Activated CD4-positive, alpha-beta T cell treated with anti-CD3 and anti-CD28 coated beads, Interleukin-2, amount 10 ng/mL, durations not matched to agents 24 days and 14 days (primary cell): ENCODE measurements at regions of chr5 and their contacts with region 1.

Region 1: DNA sequence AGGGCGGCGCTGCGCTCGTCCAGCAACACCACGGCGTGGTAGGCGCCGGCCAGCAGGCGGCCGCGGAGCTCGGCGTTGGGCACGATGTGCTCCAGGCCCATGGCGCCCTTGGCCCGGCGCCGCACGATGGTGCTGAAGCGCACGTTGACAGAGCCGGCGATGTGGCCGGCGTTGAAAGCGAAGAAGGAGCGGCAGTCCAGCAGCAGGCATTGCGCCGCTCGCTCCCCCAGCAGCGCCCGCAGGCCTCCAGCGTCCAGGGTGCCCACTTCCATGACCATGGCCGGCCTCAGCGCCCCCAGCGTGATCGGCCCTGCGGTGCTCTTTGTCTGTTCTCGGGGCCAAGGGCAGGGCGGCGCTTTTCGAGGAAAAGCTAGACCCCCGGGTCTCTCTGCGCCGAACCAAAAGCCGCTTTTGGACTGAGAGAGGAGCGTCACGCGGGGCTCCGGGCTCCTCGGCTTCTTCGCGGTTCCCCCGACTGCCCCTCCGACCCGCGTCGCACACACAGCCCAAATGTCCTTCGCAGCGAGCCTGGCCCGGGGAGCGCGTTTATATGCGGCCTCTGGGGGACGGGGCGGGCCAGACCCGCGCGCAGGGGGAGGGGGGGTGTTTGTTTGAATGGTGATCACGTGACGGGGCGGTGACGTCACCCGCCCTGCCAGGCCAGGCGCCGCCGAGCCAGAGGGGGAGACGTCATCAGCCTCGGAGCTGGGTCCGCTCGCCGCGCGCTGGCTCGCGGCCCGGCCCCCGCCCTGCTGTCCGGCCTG is at the start of gene DUSP1:
- DNase-seq: peak; percentile 98
- H3K4me3 Mint-ChIP-seq: peak within 1 kb of the TSS; percentile 91
- H3K27ac Mint-ChIP-seq: peak within 1 kb of the TSS; percentile 98
- H3K4me1 Mint-ChIP-seq: peaks cover 43% of the 10 kb centered on the region
- H3K27me3 Mint-ChIP-seq: no peaks in the 10 kb centered on the region
- total RNA-seq, gene DUSP1: 10.2 and 10.6 TPM in 2 replicates

Region 2: DNA sequence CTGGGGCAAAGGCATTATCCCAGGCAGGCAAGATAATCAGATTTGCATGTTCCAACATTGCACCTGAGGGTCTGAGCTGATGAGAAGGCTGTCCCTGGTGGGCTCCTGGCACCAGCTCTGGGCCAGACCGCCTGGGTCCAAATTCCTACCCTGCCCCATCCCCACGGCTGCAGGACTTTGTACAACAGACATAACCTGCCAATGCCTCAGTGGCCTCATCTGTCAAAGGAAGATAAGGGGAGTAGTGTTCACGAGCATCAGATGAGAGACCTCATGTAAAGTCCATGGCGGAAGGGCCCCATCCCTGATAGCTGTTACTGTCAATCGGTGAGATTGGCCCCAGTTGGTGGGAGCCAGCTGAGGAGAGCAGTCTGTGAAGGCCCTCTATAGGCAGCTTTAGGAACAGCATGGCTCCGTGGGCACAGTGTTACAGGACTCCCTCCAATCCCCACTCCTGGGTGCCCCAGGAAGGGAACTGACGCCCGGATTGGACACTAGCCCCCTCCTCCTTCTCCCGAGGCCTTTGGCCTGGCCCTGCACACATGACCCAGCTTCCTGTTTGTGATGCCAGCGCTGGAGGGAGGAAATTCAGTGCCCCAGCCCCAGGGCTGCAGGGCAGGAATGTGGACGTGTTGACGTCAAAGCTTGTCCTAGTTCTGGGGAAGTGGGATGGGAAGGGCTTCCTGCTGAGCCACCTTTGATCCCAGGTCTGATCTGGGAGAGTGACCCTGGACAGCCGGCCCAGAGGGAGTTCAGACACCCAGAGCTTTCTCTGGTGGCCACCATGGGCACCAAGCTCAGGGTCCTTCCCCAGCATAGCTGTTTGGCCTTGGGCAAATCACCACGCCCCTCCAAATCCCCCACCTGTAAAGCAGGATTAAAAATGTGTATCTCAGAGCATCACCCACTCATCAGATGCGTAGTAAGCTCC is 56.1 kb before region 1 on chr5:
- intact Hi-C with region 1: loop called (anchors 2 kb)
- DNase-seq: peak; percentile 90
- H3K4me3 Mint-ChIP-seq: no peak overlapping the region
- H3K27ac Mint-ChIP-seq: no peak overlapping the region
- H3K4me1 Mint-ChIP-seq: peaks cover 2% of the 10 kb centered on the region
- H3K27me3 Mint-ChIP-seq: peaks cover 10% of the 10 kb centered on the region

Region 3: GRCh38 chr5:172833686-172834414 is 63.0 kb after region 1 on chr5 and contains the start of gene ERGIC1:
- intact Hi-C with region 1: loop called (anchors 2 kb)
- DNase-seq: peak; percentile 95
- H3K4me3 Mint-ChIP-seq: peak within 1 kb of the TSS; percentile 89
- H3K27ac Mint-ChIP-seq: peak within 1 kb of the TSS; percentile 76
- H3K4me1 Mint-ChIP-seq: peaks cover 27% of the 10 kb centered on the region
- H3K27me3 Mint-ChIP-seq: no peaks in the 10 kb centered on the region
- total RNA-seq, gene ERGIC1: 47.1 and 47.3 TPM in 2 replicates

Region 4: GRCh38 chr5:173144200-173145176 is 373.6 kb after region 1 on chr5 and contains the start of gene BNIP1:
- intact Hi-C with region 1: loop called (anchors 2 kb)
- DNase-seq: peak; percentile 99
- H3K4me3 Mint-ChIP-seq: peak within 1 kb of the TSS; percentile 97
- H3K27ac Mint-ChIP-seq: peak within 1 kb of the TSS; percentile 98
- H3K4me1 Mint-ChIP-seq: peaks cover 13% of the 10 kb centered on the region
- H3K27me3 Mint-ChIP-seq: no peaks in the 10 kb centered on the region
- total RNA-seq, gene BNIP1: 20.9 and 26.5 TPM in 2 replicates